ENCODE measurements at regions of chr14 and their contacts with region 1.

Region 1: GRCh38 chr14:89720741-89721315 is 233.7 kb downstream of the EFCAB11 start:
- DNase-seq: peak; percentile 72
- ATAC-seq: peak; percentile 82
- H3K4me3 Mint-ChIP-seq: peak overlapping the region; percentile 37
- H3K27ac Mint-ChIP-seq: peak overlapping the region; percentile 96
- H3K4me1 Mint-ChIP-seq: peaks cover 74% of the 10 kb centered on the region
- H3K27me3 Mint-ChIP-seq: no peaks in the 10 kb centered on the region

Region 2: DNA sequence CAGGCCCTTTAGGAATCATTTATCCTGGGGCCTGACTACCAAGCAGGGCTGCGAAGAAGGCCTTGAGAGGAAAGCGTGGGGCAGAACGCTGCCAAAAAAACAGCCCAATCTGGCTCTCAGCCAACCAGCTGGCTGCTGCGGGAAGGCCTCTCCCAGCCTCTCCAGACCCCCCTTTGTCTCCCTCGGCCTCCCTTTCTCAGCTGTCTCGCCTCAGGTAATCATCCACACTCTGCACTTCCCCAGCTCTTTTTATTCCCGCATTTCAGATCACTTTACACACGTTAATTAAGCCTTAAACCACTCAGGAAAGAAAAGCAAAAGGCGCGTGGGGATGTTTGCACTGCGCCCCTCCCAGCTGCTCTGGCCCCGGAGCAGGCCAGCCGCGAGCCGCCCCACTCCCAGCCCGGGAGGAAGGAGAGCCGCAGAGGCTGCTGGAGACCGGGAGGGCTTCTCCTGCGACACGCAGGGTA is 95.5 kb before region 1 on chr14:
- CTCF ChIA-PET with region 1: no interaction called
- POLR2A ChIA-PET with region 1: no interaction called
- intact Hi-C with region 1: loop called (anchors 2 kb)
- DNase-seq: no peak
- ATAC-seq: no peak
- H3K4me3 Mint-ChIP-seq: no peak overlapping the region
- H3K27ac Mint-ChIP-seq: peak overlapping the region; percentile 96
- H3K4me1 Mint-ChIP-seq: peaks cover 81% of the 10 kb centered on the region
- H3K27me3 Mint-ChIP-seq: no peaks in the 10 kb centered on the region

Region 3: DNA sequence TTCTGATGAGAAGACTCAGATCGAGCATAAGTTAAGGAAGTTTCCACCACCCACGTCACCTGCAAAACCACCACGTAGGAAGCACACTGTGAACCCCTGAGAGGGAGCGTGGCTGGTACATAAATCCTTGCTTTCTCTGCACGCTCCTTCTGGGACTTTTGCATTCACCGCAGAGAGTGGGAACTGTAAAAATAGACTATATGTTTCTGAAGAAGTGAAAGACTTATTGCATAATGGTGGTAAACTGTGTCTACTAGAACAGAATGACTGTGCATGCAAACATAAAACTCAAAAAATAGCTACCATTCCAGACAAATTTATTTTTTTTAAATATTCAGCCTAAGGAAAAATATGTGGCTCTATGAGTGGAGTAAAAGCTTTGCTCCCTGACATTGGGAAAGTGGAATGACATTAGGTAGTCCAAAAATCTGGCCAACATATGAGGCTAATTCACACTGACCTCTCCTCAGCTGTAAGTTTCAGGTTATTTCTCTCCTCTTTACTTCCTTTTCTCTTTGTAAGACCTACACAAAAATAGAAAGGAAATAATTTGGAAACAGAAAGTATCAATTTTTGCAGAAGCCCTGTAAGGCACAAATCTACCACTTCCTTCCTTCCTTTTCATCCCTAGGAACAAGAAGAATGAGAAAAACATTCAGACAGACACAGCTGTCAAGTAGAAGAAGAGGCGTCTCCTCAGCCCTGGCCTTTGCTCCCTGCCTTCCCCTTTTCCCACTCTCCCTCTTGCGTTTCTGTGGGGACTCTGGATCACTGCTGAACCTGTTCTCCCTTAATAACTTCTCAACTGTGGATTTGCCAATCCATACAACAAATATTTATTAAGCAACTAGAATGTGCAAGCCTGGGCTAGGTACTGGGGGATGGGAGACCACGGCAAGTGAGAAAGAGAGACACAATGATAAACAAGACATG is 39.5 kb before region 1 on chr14:
- CTCF ChIA-PET with region 1: interaction called, 3 read pairs
- POLR2A ChIA-PET with region 1: interaction called, 4 read pairs
- intact Hi-C with region 1: loop called (anchors 2 kb)
- DNase-seq: peak; percentile 81
- ATAC-seq: peak; percentile 88
- H3K4me3 Mint-ChIP-seq: peak overlapping the region; percentile 58
- H3K27ac Mint-ChIP-seq: peak overlapping the region; percentile 83
- H3K4me1 Mint-ChIP-seq: peaks cover 41% of the 10 kb centered on the region
- H3K27me3 Mint-ChIP-seq: no peaks in the 10 kb centered on the region

Region 4: DNA sequence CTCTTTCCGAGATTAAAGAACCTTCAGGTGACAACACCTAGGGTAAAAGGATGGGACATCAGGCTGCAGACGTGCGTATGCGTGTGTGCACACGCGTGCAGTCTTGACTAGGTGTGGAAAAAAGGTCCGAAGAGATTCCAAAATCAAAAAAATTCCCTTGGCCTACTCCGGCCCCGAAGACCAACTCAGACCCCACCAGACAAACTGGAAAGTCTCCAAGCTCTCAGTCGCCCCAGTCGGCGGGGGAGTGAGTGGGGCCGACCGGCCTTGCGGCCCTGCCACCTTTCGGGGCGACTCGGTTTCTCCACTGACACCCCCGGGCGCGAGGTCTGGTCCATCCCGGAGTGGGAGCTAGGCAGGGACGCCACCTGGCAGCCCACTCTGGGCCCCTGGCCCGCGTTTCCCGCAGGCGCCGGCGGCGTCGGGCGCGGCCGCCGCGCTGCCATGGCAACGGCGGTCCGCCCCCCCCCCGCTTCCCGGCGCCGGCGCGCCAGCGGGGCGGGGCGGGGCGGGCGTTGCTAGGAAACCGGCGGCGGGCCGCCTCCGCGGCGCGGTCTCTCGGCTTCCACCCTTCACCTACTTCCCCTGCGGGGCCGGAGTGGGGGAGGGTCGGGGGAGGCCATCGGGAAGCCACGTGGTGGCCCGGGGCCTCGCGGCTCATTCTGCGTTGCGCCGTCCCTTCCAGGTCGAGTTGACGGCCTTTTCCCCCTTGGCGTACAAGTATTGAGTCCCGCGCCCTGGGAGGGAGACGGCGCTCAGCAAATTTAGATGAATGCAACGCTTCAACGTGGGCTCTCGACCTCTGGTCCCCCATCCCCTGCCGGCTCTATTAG is 19.4 kb before region 1 on chr14:
- CTCF ChIA-PET with region 1: interaction called, 7 read pairs
- POLR2A ChIA-PET with region 1: no interaction called
- intact Hi-C with region 1: loop called (anchors 1 to 2 kb)
- DNase-seq: peak; percentile 92
- ATAC-seq: peak; percentile 81
- H3K4me3 Mint-ChIP-seq: peak overlapping the region; percentile 65
- H3K27ac Mint-ChIP-seq: peak overlapping the region; percentile 83
- H3K4me1 Mint-ChIP-seq: peaks cover 49% of the 10 kb centered on the region
- H3K27me3 Mint-ChIP-seq: no peaks in the 10 kb centered on the region

Region 5: DNA sequence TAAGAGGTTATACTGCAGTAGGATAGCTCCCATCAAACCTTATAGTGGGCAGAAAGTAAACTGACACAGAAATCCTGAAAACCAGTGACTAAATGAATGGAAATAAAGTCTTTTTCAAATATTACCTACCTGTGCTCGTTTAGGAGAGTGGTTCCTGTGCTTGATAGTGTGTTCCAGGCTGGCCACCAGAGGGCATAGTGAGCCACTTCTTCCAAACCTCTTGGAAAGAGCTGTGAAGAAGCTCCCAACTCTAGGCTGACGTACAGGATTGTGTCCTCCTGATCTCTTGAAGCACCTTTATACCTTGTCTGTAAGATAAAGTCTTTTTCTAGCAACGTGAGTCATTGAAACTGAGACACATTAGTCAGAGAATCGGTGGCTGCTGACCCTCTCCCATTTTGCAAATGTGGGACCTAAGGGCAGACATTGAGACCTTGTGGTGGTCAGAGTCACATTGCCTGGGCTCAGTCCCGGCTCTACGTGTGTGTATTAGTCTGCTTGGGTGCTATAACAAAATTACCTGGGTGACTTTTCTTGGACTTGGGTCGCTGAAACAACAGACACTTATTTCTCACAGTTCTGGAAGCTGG is 252.5 kb after region 1 on chr14:
- CTCF ChIA-PET with region 1: no interaction called
- POLR2A ChIA-PET with region 1: no interaction called
- intact Hi-C with region 1: no loop called
- DNase-seq: peak; percentile 70
- ATAC-seq: peak; percentile 63
- H3K4me3 Mint-ChIP-seq: no peak overlapping the region
- H3K27ac Mint-ChIP-seq: no peak overlapping the region
- H3K4me1 Mint-ChIP-seq: no peaks in the 10 kb centered on the region
- H3K27me3 Mint-ChIP-seq: no peaks in the 10 kb centered on the region